ENCODE measurements at regions of chr16 and their contacts with region 1.

Region 1: GRCh38 chr16:46896314-46896968 is 12.3 kb downstream of the GPT2 start:
- DNase-seq: no peak
- ATAC-seq: peak; percentile 7; the same call in 2 of the 3 replicates
- H3K4me3 ChIP-seq: peak overlapping the region in 1 of 3 experiments; percentile 15; a peak in 1 of 6 replicates
- H3K27ac ChIP-seq: peak overlapping the region; percentile 80
- H3K4me1 ChIP-seq: peaks cover 79% of the 10 kb centered on the region
- H3K27me3 ChIP-seq: no peaks in the 10 kb centered on the region
- CTCF ChIP-seq: no peak
- EP300 ChIP-seq: no peak
- POLR2A ChIP-seq: peak in 1 of 2 experiments; percentile 10; a peak in 1 of 4 replicates
- RAD21 ChIP-seq: no peak

Region 2: GRCh38 chr16:46871587-46871986 is 24.9 kb before region 1 on chr16:
- CTCF ChIA-PET with region 1: no interaction called
- POLR2A ChIA-PET with region 1: interaction called, 22 read pairs
- in situ Hi-C with region 1: no loop called
- intact Hi-C with region 1: no loop called
- DNase-seq: no peak
- ATAC-seq: no peak
- H3K4me3 ChIP-seq: no peak overlapping the region
- H3K27ac ChIP-seq: no peak overlapping the region
- H3K4me1 ChIP-seq: peaks cover 100% of the 10 kb centered on the region
- H3K27me3 ChIP-seq: no peaks in the 10 kb centered on the region
- CTCF ChIP-seq: no peak
- EP300 ChIP-seq: no peak
- POLR2A ChIP-seq: no peak
- RAD21 ChIP-seq: no peak

Region 3: GRCh38 chr16:46937536-46937935 is 41.1 kb after region 1 on chr16:
- CTCF ChIA-PET with region 1: no interaction called
- POLR2A ChIA-PET with region 1: no interaction called
- in situ Hi-C with region 1: no loop called
- intact Hi-C with region 1: no loop called
- DNase-seq: no peak
- ATAC-seq: no peak
- H3K4me3 ChIP-seq: no peak overlapping the region
- H3K27ac ChIP-seq: no peak overlapping the region
- H3K4me1 ChIP-seq: peaks cover 10% of the 10 kb centered on the region
- H3K27me3 ChIP-seq: no peaks in the 10 kb centered on the region
- CTCF ChIP-seq: no peak
- EP300 ChIP-seq: no peak
- POLR2A ChIP-seq: no peak
- RAD21 ChIP-seq: no peak